ENCODE measurements at regions of chr5 and their contacts with region 1.

Region 1: GRCh38 chr5:33969572-33970452 is 14.7 kb downstream of the SLC45A2 start:
- H3K4me3 ChIP-seq: no peak overlapping the region
- H3K27ac ChIP-seq: no peak overlapping the region
- H3K4me1 ChIP-seq: no peaks in the 10 kb centered on the region
- CTCF ChIP-seq: no peak; the same call in 1 of the 2 replicates

Region 2: DNA sequence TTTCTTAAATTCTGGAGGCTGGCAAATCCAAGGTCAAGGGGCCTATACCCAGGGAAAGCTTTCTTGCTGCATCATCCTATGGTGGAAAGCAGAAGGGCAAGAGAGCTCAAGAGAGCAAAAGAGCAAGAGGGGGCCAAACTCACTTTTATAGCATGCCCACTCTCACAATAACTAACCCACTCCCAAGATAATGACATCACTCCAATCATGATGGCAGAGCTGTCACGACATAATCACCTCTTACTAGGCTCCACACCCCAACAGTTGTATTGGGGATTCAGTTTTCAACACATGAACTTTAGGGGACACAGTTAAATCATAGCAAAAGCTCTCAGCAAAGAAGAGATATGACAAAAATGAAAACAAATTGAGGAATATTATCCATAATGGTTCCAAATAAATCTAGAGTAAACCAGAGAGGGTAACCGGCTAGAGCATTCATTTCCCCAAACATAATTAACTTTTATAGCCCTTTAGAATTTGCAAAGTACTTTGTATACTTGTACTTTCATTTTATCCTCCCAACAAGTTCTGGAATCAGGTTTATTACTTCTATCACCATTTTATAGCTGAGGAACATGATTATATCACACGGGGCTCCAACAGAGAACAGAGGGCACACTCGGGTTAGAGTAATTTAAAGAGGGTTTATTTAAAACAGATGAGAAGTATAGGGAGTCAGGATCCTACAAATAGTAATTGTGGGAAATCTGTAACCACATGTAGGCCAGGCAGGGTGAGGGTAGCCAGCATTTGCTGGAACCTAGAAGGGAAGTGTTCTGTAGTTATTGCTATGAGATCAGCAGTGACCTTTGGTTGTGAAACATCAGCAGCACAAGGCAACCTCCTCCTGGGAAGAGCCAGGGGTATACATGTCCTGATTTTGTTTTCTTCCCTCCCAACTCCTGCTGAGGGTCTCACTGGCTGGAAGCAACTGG is 536.2 kb before region 1 on chr5:
- CTCF ChIA-PET with region 1: interaction called, 22 read pairs
- POLR2A ChIA-PET with region 1: no interaction called
- H3K4me3 ChIP-seq: no peak overlapping the region
- H3K27ac ChIP-seq: no peak overlapping the region
- H3K4me1 ChIP-seq: no peaks in the 10 kb centered on the region
- CTCF ChIP-seq: no peak

Region 3: GRCh38 chr5:33588654-33589372 is 381.0 kb before region 1 on chr5:
- CTCF ChIA-PET with region 1: interaction called, 10 read pairs
- POLR2A ChIA-PET with region 1: no interaction called
- H3K4me3 ChIP-seq: no peak overlapping the region
- H3K27ac ChIP-seq: no peak overlapping the region
- H3K4me1 ChIP-seq: no peaks in the 10 kb centered on the region
- CTCF ChIP-seq: peak; percentile 42; the same call in 1 of the 2 replicates

Region 4: DNA sequence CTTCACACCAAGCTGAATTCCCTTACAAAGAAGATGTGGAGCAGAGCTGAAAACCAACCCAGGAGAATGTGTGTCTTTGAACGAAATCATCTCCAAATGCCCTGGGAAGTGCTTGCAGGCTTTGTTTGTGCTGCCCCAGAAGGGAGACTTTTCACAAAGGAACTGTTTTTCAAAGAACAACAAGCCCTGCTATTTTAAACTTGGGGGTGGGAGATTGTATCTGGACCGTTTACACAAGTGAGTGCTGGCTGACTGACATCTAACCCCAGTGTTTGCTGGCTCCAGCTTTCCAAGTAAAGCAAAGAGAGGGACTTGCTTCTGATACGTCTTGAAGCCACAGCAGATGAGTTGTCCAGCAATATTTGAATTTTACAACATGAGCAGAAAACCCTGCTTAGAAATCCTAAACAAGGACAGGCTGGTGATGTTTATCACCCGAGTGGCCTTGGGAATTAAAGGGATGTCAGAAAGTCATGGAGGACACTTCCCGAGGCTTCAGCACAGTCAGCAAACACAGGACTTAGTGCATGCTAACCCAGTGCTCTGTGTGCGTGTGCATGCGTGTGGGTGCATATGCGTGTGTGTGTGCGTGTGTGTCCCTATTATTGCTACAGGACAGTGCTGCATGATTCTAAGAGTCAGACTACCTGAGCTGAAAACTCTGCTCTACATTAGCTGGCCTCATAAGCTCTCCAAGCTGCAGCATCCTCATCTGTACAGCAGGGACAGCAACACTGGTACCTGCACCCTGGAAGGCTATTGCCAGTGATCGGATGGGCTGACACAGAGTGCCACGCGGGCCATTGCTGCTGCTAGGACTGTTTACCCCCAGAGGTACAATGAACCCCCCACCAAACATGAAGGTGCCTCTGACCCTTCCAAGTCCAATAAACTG is 79.4 kb before region 1 on chr5:
- CTCF ChIA-PET with region 1: no interaction called
- POLR2A ChIA-PET with region 1: no interaction called
- H3K4me3 ChIP-seq: no peak overlapping the region
- H3K27ac ChIP-seq: no peak overlapping the region
- H3K4me1 ChIP-seq: peaks cover 3% of the 10 kb centered on the region; the same call in 1 of the 2 replicates
- CTCF ChIP-seq: no peak

Region 5: DNA sequence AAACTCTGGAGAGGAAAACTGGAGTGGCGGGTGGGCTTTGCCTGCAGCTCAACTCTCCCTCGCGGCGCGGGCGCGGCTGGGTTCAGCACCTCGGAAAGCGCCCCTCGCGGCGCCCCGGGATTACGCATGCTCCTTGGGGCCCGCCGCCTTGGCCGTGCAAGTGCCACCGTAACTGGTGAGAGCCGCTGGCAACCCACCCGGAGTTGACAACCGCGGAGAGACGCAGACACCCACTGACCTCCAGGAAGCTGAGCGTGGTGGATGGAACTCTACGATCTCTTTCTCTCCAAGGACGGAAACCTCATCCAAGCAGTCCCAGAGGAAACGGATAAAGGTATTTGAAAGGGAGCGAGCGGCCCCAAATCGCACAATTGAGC is 33.8 kb before region 1 on chr5:
- CTCF ChIA-PET with region 1: interaction called, 10 read pairs
- POLR2A ChIA-PET with region 1: no interaction called
- H3K4me3 ChIP-seq: no peak overlapping the region; the same call in 1 of the 2 replicates
- H3K27ac ChIP-seq: no peak overlapping the region
- H3K4me1 ChIP-seq: no peaks in the 10 kb centered on the region
- CTCF ChIP-seq: no peak

Region 6: DNA sequence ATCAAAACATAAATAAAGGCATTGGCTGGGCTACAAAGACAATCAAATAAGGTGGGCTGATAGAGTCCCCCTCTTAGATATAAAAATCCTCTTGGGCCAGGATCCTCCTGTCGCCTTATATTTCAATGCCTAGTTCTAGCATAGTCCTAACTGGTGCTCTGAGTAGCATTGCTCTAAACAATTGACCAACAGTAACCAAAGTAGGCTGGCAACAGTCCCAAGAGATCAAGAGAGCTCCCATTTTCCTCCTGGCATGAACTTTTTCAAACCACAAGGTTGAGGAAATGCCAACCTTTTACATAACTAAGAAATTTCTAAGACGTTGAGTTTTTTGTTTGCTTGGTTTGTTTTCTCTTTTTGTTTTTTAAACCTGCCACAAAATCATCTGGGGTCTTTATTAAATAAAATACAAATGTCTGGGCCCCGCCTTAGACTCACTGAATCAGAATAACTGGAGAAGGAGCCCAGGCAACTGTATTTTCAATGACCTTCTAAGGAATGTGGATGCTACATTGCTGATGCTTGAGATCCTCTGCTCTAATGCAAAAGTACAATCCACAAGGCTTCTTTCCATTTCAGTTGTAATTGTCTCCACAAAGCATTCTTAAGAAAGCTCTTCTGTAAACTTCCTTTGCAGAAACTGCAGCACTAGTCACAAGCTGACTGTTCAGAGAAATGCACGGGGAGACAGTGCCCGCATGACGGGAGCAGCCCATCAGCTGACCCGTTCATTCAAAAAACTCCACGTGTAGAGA is 11.8 kb after region 1 on chr5:
- CTCF ChIA-PET with region 1: interaction called, 14 read pairs
- POLR2A ChIA-PET with region 1: no interaction called
- H3K4me3 ChIP-seq: no peak overlapping the region
- H3K27ac ChIP-seq: no peak overlapping the region
- H3K4me1 ChIP-seq: no peaks in the 10 kb centered on the region
- CTCF ChIP-seq: no peak

Region 7: GRCh38 chr5:33997331-33997983 is 27.6 kb after region 1 on chr5:
- CTCF ChIA-PET with region 1: interaction called, 28 read pairs
- POLR2A ChIA-PET with region 1: no interaction called
- H3K4me3 ChIP-seq: no peak overlapping the region
- H3K27ac ChIP-seq: no peak overlapping the region
- H3K4me1 ChIP-seq: no peaks in the 10 kb centered on the region; the same call in 1 of the 2 replicates
- CTCF ChIP-seq: peak; percentile 55

Measured in HEK293 (cell line).